ENCODE measurements at regions of chr11 and their contacts with region 1.

Region 1: GRCh38 chr11:60985991-60986915 is 14.8 kb downstream of the CD6 start:
- DNase-seq: peak; percentile 65
- ATAC-seq: peak; percentile 63
- H3K4me3 ChIP-seq: peak overlapping the region in 1 of 5 experiments; percentile 3
- H3K4me3 Mint-ChIP-seq: peak overlapping the region; percentile 21
- H3K27ac ChIP-seq: peak overlapping the region; percentile 61 to 71
- H3K27ac Mint-ChIP-seq: peak overlapping the region; percentile 86
- H3K4me1 ChIP-seq: peaks cover 23 to 42% of the 10 kb centered on the region in 2 donors
- H3K4me1 Mint-ChIP-seq: peaks cover 42% of the 10 kb centered on the region
- H3K27me3 ChIP-seq: no peaks in the 10 kb centered on the region
- H3K27me3 Mint-ChIP-seq: no peaks in the 10 kb centered on the region
- CTCF ChIP-seq: no peak

Region 2: GRCh38 chr11:60710482-60710881 is 275.8 kb before region 1 on chr11:
- CTCF ChIA-PET with region 1: no interaction called
- POLR2A ChIA-PET with region 1: no interaction called
- intact Hi-C with region 1: no loop called
- DNase-seq: no peak
- ATAC-seq: no peak
- H3K4me3 ChIP-seq: no peak overlapping the region
- H3K4me3 Mint-ChIP-seq: no peak overlapping the region
- H3K27ac ChIP-seq: no peak overlapping the region
- H3K27ac Mint-ChIP-seq: no peak overlapping the region
- H3K4me1 ChIP-seq: no peaks in the 10 kb centered on the region
- H3K4me1 Mint-ChIP-seq: no peaks in the 10 kb centered on the region
- H3K27me3 ChIP-seq: peaks cover 0 to 4% (median 2%) of the 10 kb centered on the region in 4 experiments
- H3K27me3 Mint-ChIP-seq: peaks cover 35% of the 10 kb centered on the region
- CTCF ChIP-seq: no peak

Region 3: GRCh38 chr11:61021661-61022212 is 35.5 kb after region 1 on chr11:
- CTCF ChIA-PET with region 1: no interaction called
- POLR2A ChIA-PET with region 1: interaction called, 4 read pairs
- intact Hi-C with region 1: loop called (anchors 5 kb)
- DNase-seq: peak; percentile 85
- ATAC-seq: peak; percentile 83
- H3K4me3 ChIP-seq: peak overlapping the region in 4 of 5 experiments; percentile 7 to 50 (median 32)
- H3K4me3 Mint-ChIP-seq: peak overlapping the region; percentile 80
- H3K27ac ChIP-seq: peak overlapping the region; percentile 39 to 45
- H3K27ac Mint-ChIP-seq: peak overlapping the region; percentile 89
- H3K4me1 ChIP-seq: peaks cover 43 to 51% of the 10 kb centered on the region in 2 donors
- H3K4me1 Mint-ChIP-seq: peaks cover 55% of the 10 kb centered on the region
- H3K27me3 ChIP-seq: no peaks in the 10 kb centered on the region
- H3K27me3 Mint-ChIP-seq: no peaks in the 10 kb centered on the region
- CTCF ChIP-seq: no peak

Measured in B cell (primary cell).